Dorsolateral prefrontal cortex (tissue), 120 donors: ENCODE measurements at regions of chr18 and their contacts with region 1.

Region 1: DNA sequence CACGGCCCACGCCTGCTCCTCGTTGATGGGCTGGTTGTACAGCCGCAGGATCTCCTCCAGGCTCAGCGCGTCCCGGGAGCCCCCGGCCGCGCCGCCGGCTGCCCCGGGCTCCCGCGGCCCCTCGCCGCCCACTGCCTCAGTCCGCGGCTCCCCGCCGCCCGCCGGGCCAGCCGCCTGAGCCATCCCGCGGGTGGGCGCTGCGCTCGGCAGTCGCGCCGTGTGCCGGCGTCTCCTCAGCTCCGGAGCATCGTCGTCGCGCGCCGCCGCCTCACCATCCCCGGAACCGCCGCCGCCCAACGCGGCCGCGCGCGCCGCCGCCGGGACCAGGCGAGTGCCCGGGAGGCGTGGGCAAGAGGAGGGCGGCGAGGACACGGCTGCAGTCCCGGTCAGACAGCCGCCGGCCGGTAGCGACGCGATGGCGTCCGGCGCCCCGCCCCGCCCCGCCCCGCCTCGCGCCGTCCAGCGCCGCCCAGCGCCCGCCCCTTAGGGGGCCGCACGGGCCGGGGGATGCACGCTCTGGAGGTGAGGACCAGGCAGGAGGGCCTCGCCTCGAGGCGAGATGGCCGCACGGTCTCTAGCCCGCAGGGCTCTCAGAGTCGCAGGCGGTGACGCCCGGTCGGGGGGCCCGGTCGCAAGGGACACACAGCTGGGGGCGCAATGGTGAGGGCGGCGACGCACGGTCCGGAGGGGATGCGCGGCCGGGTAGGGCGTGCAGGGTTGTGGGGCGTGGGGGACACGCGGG is at the start of gene SPIRE1:
- DNase-seq: peak; percentile 39 to 83 (median 65)
- H3K4me3 ChIP-seq: peak within 1 kb of the TSS; percentile 61 to 93 (median 82)
- H3K27ac ChIP-seq: peak within 1 kb of the TSS; percentile 51 to 99 (median 95)
- H3K27me3 ChIP-seq: no peaks in the 10 kb centered on the region
- CTCF ChIP-seq: peak in 34 of 56 donors; percentile 6 to 61 (median 30)
- total RNA-seq, gene SPIRE1: 76.6 to 170 (median 113) TPM

Region 2: DNA sequence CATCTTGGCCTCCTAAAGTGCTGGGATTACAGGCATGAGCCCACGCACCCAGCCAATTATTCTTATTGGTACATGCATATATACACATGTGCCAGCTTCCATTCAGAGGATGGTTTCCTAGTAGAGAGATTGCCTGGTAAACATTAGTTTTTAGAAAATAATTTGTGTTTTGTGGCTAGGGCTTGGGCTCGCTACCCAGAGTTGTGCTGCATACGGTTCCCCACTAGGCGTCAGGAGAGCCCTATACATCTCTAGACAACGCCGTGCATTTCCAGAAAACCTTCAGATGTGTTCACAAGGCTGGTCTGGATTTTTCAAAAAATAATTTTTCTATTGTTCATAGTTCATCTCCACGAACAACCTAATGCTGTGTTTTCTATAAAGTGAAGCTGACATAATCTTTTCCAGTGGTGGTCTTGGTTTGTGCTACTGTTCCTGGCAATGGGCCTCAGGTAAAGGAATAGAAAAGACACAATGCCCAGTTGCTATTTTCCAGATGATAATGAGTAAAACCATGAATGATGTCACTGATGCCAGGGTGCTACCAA is 266.2 kb before region 1 on chr18:
- intact Hi-C with region 1: loop called (anchors 1 to 2 kb)
- DNase-seq: peak in 9 of 10 donors; percentile 42 to 72 (median 66)
- H3K4me3 ChIP-seq: peak overlapping the region in 1 of 59 donors; percentile 5
- H3K27ac ChIP-seq: peak overlapping the region in 14 of 59 donors; percentile 7 to 77 (median 46)
- H3K27me3 ChIP-seq: no peaks in the 10 kb centered on the region
- CTCF ChIP-seq: peak in 55 of 56 donors; percentile 62 to 99 (median 89)

Region 3: DNA sequence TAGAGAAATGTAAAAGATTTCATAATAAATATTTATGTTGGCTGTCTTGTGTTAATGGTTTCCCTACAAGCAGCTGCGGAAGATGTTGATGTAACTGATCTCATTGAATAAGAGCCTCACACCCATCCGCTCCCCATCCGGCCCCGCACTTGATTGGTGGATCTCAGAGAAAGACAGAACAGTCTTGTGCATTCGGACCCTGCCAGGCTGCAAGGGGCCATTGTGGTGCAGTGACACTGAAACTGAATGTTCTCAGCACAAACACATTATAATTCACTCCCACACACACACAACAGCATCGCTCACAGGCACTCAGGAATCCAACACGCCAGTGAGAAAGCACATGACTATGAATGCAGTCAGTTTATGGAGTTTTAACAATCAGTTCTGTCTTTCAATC is 202.4 kb before region 1 on chr18:
- intact Hi-C with region 1: loop called (anchors 2 to 5 kb)
- DNase-seq: peak; percentile 35 to 99 (median 93)
- H3K4me3 ChIP-seq: peak overlapping the region in 31 of 59 donors; percentile 0 to 53 (median 19)
- H3K27ac ChIP-seq: peak overlapping the region; percentile 5 to 99 (median 93)
- H3K27me3 ChIP-seq: no peaks in the 10 kb centered on the region
- CTCF ChIP-seq: peak in 10 of 56 donors; percentile 9 to 29 (median 22)

Region 4: DNA sequence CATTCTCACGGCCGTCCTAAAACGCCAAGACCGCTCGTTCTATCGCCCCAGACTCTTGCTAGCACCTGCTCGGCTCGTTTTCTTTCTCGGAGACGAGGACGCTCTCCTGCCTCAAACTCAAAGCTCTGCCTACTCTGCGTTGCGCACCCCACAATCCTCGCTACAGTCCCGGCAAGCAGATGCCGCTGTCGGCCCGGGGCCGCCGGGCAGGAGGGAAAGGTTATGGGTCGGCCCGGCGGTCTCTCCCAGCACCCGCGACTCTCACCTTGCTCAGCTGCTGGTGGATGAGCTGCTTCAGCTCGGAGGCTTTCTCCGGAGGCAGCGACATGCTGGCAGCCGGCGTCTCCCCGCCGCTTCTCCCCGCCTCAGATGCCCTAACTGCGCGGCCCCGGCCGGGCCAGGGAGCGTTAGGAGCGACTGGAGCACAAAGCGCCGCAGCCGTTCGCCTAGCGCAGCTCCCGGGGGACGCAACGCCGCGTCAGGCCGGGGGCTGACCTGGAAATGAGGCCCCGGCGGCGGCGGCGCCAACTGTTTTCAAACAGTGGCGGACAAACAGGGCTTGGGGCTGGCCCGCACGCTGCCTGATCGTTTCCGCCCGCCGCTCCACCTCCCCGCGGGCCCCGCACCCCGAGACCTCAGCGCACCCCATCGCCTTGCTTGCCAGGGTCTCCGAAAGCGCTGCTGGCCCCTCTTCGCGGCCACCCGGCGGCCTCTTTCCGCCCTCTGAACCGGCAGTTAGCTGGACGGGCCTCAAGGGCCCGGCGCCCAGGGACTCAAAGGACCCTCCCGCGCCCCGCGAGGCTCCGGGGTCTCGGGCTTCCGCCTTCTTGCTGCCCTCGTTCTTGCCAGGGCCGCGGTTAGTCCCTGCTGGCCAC is 44.6 kb after region 1 on chr18 and contains the starts of genes CEP76 and PSMG2:
- intact Hi-C with region 1: loop called in 1 of 2 experiments (anchors 5 kb)
- DNase-seq: peak; percentile 72 to 89 (median 84)
- H3K4me3 ChIP-seq: peak within 1 kb of the TSS; percentile 58 to 99 (median 94)
- H3K27ac ChIP-seq: peak within 1 kb of the TSS; percentile 63 to 100 (median 98)
- H3K27me3 ChIP-seq: no peaks in the 10 kb centered on the region
- CTCF ChIP-seq: peak in 28 of 56 donors; percentile 3 to 43 (median 20)
- total RNA-seq, gene CEP76: 5.4 to 17.5 (median 10.4) TPM
- total RNA-seq, gene PSMG2: 46.0 to 79.5 (median 56.9) TPM

Region 5: DNA sequence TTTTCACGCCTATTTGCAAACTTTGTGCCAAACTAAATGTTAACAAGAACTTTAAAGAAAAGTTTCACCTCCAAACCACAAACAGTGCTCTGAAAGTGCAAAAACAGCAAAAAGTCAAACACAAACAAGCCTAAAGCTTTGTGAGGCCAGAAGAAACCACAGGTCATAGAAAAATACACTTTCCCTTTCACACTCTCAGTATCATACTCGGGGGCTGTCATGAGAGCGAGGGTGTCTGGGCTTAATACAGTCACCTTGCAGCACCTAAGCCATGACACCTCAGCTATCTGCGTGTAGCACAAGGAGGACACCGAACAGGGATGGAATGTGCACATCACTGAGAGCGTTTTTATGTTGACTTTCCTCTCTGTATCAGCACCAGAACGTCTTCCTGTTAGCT is 263.3 kb after region 1 on chr18:
- intact Hi-C with region 1: no loop called
- DNase-seq: no peak
- H3K4me3 ChIP-seq: no peak overlapping the region
- H3K27ac ChIP-seq: no peak overlapping the region
- H3K27me3 ChIP-seq: no peaks in the 10 kb centered on the region
- CTCF ChIP-seq: no peak